Ovary (tissue), 10 donors: ENCODE measurements at regions of chr9 and their contacts with region 1.

Region 1: GRCh38 chr9:77725820-77726219 is 77.7 kb upstream of the GNA14 start:
- DNase-seq: no peak
- H3K4me3 ChIP-seq: no peak overlapping the region
- H3K27ac ChIP-seq: no peak overlapping the region
- H3K4me1 ChIP-seq: peaks cover 7% of the 10 kb centered on the region
- H3K27me3 ChIP-seq: no peaks in the 10 kb centered on the region
- CTCF ChIP-seq: no peak
- EP300 ChIP-seq: no peak
- POLR2A ChIP-seq: no peak

Region 2: DNA sequence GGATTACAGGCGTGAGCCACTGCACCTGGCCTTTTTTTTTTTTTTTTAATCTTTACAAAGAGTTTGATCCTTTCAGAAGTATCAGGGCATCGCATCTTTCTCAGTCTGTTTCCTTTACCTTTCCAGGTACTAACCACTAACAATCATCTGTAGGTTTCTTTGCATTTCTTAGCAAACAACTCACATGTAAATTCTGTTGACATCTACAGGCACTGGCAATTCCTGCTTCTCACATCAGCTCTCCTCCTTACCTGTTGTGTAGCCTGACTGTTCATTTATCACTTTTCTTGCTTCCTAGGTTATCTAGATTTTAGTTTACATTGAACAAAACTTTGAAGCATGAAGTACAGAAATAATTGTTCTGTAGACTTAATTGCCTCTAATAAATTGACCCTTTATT is 575.9 kb before region 1 on chr9:
- intact Hi-C with region 1: no loop called
- DNase-seq: no peak
- H3K4me3 ChIP-seq: no peak overlapping the region
- H3K27ac ChIP-seq: no peak overlapping the region
- H3K4me1 ChIP-seq: no peaks in the 10 kb centered on the region
- H3K27me3 ChIP-seq: no peaks in the 10 kb centered on the region
- CTCF ChIP-seq: no peak
- EP300 ChIP-seq: no peak
- POLR2A ChIP-seq: no peak

Region 3: DNA sequence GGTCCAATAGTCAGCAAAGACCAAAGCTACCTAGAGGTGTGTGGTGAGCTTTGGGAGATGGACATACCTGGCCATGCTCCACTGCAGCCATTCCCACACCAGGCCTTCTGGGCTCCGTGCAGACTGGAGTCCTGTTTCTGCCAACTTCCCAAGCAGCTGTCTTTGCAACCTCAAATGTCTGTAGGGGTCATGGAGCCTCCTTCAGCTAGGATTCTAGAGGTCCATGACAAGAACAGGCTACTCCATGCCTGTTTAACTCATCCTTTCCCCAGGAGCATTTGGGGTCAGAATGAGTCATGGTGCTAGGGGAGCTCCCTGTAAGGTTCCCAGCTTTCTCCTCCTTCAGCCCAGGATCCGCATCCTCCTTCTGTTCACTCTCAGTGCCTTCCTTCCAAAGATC is 531.4 kb before region 1 on chr9:
- intact Hi-C with region 1: loop called in 1 of 4 experiments (anchors 5 kb)
- DNase-seq: no peak
- H3K4me3 ChIP-seq: no peak overlapping the region
- H3K27ac ChIP-seq: no peak overlapping the region
- H3K4me1 ChIP-seq: no peaks in the 10 kb centered on the region
- H3K27me3 ChIP-seq: no peaks in the 10 kb centered on the region
- CTCF ChIP-seq: no peak
- EP300 ChIP-seq: no peak
- POLR2A ChIP-seq: no peak

Region 4: GRCh38 chr9:77680581-77680980 is 45.2 kb before region 1 on chr9:
- intact Hi-C with region 1: no loop called
- DNase-seq: no peak
- H3K4me3 ChIP-seq: no peak overlapping the region
- H3K27ac ChIP-seq: no peak overlapping the region
- H3K4me1 ChIP-seq: no peaks in the 10 kb centered on the region
- H3K27me3 ChIP-seq: no peaks in the 10 kb centered on the region
- CTCF ChIP-seq: no peak
- EP300 ChIP-seq: no peak
- POLR2A ChIP-seq: no peak

Region 5: GRCh38 chr9:77926309-77926959 is 200.6 kb after region 1 on chr9:
- intact Hi-C with region 1: no loop called
- DNase-seq: no peak
- H3K4me3 ChIP-seq: no peak overlapping the region
- H3K27ac ChIP-seq: no peak overlapping the region
- H3K4me1 ChIP-seq: peaks cover 5% of the 10 kb centered on the region
- H3K27me3 ChIP-seq: no peaks in the 10 kb centered on the region
- CTCF ChIP-seq: no peak
- EP300 ChIP-seq: no peak
- POLR2A ChIP-seq: no peak